ENCODE measurements at regions of chr6 and their contacts with region 1.

Region 1: GRCh38 chr6:154733012-154733625 is at the start of gene SCAF8:
- DNase-seq: peak; percentile 97
- H3K4me3 Mint-ChIP-seq: peak within 1 kb of the TSS; percentile 89
- H3K27ac Mint-ChIP-seq: peak within 1 kb of the TSS; percentile 99
- H3K4me1 Mint-ChIP-seq: peaks cover 34% of the 10 kb centered on the region
- H3K27me3 Mint-ChIP-seq: no peaks in the 10 kb centered on the region
- total RNA-seq, gene SCAF8: 36.6 and 37.5 TPM in 2 replicates

Region 2: DNA sequence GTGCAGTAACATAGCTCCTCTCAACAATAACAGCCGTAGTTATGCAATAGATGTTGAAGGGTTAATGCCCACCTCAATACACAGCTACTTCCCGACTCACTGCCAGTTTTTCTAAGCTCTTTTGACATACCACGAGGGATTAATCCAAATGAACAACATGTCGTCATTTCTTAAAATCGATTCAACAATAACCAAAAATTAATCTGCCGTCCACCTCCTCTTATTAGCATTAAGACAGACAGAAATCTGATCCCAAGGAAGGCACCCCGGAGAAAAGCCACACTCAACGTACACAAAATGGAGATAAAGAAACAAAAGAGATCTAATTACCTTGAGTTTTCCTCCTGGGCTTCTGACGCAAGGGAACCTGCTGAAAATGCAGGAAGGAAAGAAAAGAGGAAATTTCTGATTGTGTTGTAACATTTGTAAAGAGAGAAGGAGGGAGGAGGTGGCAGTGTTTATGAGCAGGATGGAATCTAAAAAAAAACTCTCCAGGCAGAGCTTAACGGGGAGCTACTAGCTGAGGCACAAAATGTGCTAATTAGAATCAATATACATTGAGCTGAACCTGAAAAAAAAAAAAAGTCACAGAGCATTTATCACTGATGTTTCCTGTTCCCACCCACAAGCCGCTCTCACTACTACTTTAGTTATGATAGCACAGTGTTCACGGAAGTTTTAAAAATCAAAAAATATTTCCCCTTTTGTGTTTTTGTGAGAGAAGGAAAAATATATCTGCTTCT is 485.8 kb before region 1 on chr6:
- intact Hi-C with region 1: loop called (anchors 10 kb)
- DNase-seq: peak; percentile 74
- H3K4me3 Mint-ChIP-seq: peak overlapping the region; percentile 83
- H3K27ac Mint-ChIP-seq: peak overlapping the region; percentile 78
- H3K4me1 Mint-ChIP-seq: peaks cover 72% of the 10 kb centered on the region
- H3K27me3 Mint-ChIP-seq: peaks cover 6% of the 10 kb centered on the region

Region 3: GRCh38 chr6:154675602-154676088 is 57.5 kb before region 1 on chr6:
- intact Hi-C with region 1: loop called (anchors 1 kb)
- DNase-seq: peak; percentile 96
- H3K4me3 Mint-ChIP-seq: no peak overlapping the region
- H3K27ac Mint-ChIP-seq: no peak overlapping the region
- H3K4me1 Mint-ChIP-seq: no peaks in the 10 kb centered on the region
- H3K27me3 Mint-ChIP-seq: peaks cover 2% of the 10 kb centered on the region

Region 4: DNA sequence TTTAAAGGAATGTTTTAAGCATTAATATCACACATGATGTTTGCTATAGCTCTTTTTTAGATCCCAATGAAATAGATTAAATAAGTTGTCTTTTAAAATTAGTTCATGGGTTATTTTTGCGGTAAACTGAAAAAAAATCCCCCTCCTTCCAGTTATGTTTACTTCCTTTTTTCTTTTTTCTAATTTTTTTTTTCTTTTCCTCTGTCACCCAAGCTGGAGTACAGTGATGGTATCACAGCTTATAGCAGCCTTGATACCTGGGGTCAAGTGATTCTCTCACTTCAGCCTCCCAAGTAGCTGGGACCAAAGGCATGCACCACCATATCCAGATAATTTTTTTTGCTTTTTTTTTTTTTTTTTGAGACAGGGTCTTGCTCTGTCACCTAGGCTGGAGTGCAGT is 17.7 kb before region 1 on chr6:
- intact Hi-C with region 1: no loop called
- DNase-seq: no peak
- H3K4me3 Mint-ChIP-seq: no peak overlapping the region
- H3K27ac Mint-ChIP-seq: no peak overlapping the region
- H3K4me1 Mint-ChIP-seq: no peaks in the 10 kb centered on the region
- H3K27me3 Mint-ChIP-seq: peaks cover 2% of the 10 kb centered on the region

Region 5: GRCh38 chr6:154773610-154774089 is 40.5 kb after region 1 on chr6:
- intact Hi-C with region 1: loop called (anchors 1 kb)
- DNase-seq: no peak
- H3K4me3 Mint-ChIP-seq: no peak overlapping the region
- H3K27ac Mint-ChIP-seq: peak overlapping the region; percentile 29
- H3K4me1 Mint-ChIP-seq: peaks cover 18% of the 10 kb centered on the region
- H3K27me3 Mint-ChIP-seq: no peaks in the 10 kb centered on the region

Region 6: GRCh38 chr6:155314092-155314772 is 581.1 kb after region 1 on chr6 and contains the start of gene TFB1M:
- intact Hi-C with region 1: loop called (anchors 5 kb)
- DNase-seq: peak; percentile 100
- H3K4me3 Mint-ChIP-seq: peak within 1 kb of the TSS; percentile 99
- H3K27ac Mint-ChIP-seq: peak within 1 kb of the TSS; percentile 98
- H3K4me1 Mint-ChIP-seq: peaks cover 27% of the 10 kb centered on the region
- H3K27me3 Mint-ChIP-seq: peaks cover 2% of the 10 kb centered on the region
- total RNA-seq, gene TFB1M: 36.8 and 41.4 TPM in 2 replicates

Measured in activated CD4-positive, alpha-beta T cell treated with anti-CD3 and anti-CD28 coated beads, Interleukin-2, amount 10 ng/mL, durations not matched to agents 24 days and 14 days (primary cell).